Spleen (tissue), 13 donors: ENCODE measurements at regions of chr19 and their contacts with region 1.

Region 1: DNA sequence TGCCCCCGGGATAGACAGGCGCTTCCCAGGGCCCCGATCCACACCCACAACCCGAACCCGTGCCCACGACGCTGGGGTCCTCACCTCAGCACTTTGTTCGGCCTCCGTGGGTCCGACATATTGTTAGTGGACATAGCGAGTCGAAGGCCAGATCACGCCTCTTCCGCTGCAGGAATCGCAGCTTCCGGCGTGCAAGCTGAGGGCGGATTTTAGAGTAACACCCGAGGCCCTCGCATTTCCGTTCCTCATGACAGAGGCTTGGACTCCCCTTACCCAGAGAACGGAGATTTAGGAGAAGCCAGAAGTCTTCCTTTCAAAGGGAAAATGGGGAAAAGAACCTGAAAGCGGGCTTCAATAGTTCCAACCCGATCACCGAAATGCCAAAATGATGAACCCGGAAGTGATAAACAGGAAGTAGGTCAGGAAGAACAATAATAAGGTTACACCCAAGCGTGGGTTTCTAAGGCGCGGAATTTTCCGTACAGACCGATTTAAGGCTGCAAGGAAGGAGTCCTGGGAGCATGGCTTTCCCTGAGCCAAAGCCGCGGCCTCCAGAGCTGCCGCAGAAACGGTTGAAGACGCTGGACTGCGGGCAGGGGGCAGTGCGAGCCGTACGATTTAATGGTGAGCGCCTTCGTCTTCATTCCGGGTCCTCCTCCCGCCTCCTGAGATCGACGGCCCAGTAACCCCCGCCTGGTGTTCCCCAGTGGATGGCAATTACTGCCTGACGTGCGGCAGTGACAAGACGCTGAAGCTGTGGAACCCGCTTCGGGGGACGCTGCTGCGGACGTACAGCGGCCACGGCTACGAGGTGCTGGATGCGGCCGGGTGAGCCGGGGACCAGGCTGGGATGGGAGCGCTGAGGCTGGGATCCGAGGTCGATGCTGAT is 2.9 kb downstream of the WDR83 start:
- DNase-seq: peak; percentile 93
- H3K4me3 ChIP-seq: peak overlapping the region; percentile 77 to 98 (median 94)
- H3K27ac ChIP-seq: peak overlapping the region; percentile 84 to 98 (median 96)
- H3K4me1 ChIP-seq: peaks cover 31 to 85% (median 61%) of the 10 kb centered on the region in 6 donors
- H3K27me3 ChIP-seq: no peaks in the 10 kb centered on the region
- CTCF ChIP-seq: peak in 3 of 11 experiments; percentile 13 to 17 (median 15)
- POLR2A ChIP-seq: no peak

Region 2: GRCh38 chr19:12564016-12564664 is 105.4 kb before region 1 on chr19:
- intact Hi-C with region 1: loop called (anchors 5 kb)
- DNase-seq: peak; percentile 96
- H3K4me3 ChIP-seq: no peak overlapping the region
- H3K27ac ChIP-seq: no peak overlapping the region
- H3K4me1 ChIP-seq: peaks cover 0 to 11% (median 6%) of the 10 kb centered on the region in 6 donors
- H3K27me3 ChIP-seq: no peaks in the 10 kb centered on the region
- CTCF ChIP-seq: peak; percentile 87 to 98 (median 96)
- POLR2A ChIP-seq: no peak